B cell (primary cell): ENCODE measurements at regions of chr2 and their contacts with region 1.

Region 1: DNA sequence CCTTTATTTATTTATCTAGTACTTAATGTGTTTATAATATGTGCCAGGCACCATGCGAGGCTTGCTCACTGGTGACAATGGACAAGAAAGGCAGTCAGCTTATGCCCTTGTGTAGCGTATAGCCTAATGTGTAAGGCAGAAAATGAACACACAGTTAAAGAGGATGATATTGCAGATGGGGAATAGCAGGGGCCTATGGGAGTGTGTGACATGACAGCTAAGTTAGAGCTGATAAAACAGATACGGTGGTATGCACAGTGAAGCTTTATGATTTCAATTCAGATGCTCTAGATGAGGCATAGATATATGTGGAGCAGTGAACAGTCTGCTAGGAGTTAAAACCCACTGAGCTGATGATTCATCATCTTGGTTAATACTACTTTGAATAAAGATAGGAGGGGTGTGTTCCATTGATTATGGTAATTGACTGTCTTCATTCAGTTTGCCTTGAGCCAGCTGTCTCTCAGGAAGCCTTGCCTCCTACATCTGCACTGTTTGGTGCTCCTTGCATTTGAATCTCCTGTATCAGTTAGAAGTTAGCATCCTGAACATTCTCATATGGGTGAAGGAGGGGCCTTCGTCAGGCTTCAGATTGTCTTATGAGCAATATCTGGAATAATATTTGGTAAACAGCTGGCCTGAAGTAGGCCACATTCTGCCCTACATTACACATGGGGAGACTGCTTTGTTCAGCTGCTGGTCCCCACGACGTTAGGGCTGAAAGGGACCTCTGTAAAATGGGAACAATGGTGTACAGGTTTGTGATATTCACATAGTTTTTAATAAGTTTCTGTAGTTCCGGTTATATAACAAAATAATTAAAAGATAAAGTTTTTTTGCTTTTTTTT is 13.2 kb downstream of the MAP4K4 start:
- DNase-seq: no peak
- ATAC-seq: peak; percentile 73
- H3K4me3 ChIP-seq: peak overlapping the region in 4 of 5 experiments; percentile 2 to 44 (median 11)
- H3K4me3 Mint-ChIP-seq: peak overlapping the region; percentile 88
- H3K27ac ChIP-seq: peak overlapping the region; percentile 62 to 94
- H3K27ac Mint-ChIP-seq: peak overlapping the region; percentile 66
- H3K4me1 ChIP-seq: peaks cover 97% of the 10 kb centered on the region in 2 donors
- H3K4me1 Mint-ChIP-seq: peaks cover 77% of the 10 kb centered on the region
- H3K27me3 ChIP-seq: no peaks in the 10 kb centered on the region
- H3K27me3 Mint-ChIP-seq: no peaks in the 10 kb centered on the region
- CTCF ChIP-seq: no peak

Region 2: GRCh38 chr2:101912545-101912944 is 201.8 kb after region 1 on chr2:
- CTCF ChIA-PET with region 1: no interaction called
- POLR2A ChIA-PET with region 1: no interaction called
- intact Hi-C with region 1: loop called (anchors 10 kb)
- DNase-seq: peak; percentile 66
- ATAC-seq: peak; percentile 95
- H3K4me3 ChIP-seq: peak overlapping the region in 3 of 5 experiments; percentile 12 to 45 (median 14)
- H3K4me3 Mint-ChIP-seq: peak overlapping the region; percentile 40
- H3K27ac ChIP-seq: peak overlapping the region; percentile 3 to 13
- H3K27ac Mint-ChIP-seq: peak overlapping the region; percentile 85
- H3K4me1 ChIP-seq: peaks cover 15 to 28% of the 10 kb centered on the region in 2 donors
- H3K4me1 Mint-ChIP-seq: peaks cover 42% of the 10 kb centered on the region
- H3K27me3 ChIP-seq: no peaks in the 10 kb centered on the region
- H3K27me3 Mint-ChIP-seq: no peaks in the 10 kb centered on the region
- CTCF ChIP-seq: no peak